ENCODE measurements at regions of chr5 and their contacts with region 1.

Region 1: DNA sequence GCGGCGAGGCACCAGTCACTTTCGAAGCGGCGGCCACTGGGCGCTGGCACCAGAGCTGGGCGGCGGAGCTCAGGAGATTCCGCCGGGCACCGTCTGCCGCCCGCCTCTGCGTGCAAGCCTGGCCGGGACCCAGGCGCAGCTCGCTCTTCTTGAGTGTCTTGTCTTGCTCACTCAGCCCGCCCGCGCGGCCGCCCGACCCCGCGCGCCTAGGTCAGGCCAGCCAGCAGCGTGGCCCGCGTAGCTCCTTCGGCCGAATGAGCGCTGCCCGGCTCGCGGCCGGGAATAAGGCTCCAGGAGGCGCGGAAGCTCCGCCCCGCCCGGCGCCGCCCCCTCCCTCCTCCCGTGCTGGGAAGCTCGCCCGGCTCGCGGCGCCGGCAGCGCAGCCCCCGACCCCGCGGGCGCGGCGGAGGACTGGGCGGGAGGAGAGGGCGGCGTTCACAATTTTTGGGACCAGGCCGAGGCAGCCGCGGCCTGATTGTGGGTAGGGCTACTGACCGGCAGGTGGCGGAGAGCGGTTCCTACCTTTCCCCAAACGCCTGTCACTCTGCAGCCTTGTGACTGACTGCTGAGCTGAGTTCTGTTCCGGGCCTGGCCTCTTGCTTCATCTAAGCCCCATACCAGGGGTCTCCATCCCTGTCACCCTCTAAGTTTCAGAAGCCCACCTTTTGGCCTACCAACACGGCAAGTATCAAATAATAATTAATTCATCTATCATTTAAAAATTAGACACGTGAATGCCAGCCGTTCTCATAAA is at the start of gene HBEGF:
- DNase-seq: peak; percentile 94
- ATAC-seq: peak; percentile 89
- H3K4me3 ChIP-seq: peak within 1 kb of the TSS; percentile 90
- H3K27ac ChIP-seq: peak within 1 kb of the TSS; percentile 82
- H3K4me1 ChIP-seq: peaks cover 42% of the 10 kb centered on the region
- H3K27me3 ChIP-seq: no peaks in the 10 kb centered on the region
- CTCF ChIP-seq: peak; percentile 52
- total RNA-seq, gene HBEGF: 44.3 TPM

Region 2: DNA sequence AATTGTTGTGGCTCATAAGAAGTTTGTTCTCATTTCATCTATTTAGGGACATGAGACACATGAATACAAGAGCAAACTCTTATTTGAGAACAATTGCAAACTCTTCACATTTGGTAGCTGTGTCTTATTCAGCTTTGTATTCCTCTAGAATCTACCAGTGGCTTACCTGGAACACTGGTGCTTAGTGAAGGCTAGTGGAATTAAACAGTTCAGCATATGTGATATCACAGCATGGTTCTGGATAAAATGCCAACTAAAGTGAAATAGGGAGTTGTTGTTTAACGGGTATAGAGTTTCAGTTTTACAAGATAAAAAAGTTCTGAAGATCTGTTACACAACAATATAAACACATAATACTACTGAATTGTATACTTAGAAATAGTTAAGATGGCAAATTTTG is 352.3 kb before region 1 on chr5:
- intact Hi-C with region 1: no loop called
- DNase-seq: no peak
- ATAC-seq: no peak
- H3K4me3 ChIP-seq: no peak overlapping the region
- H3K27ac ChIP-seq: no peak overlapping the region
- H3K4me1 ChIP-seq: no peaks in the 10 kb centered on the region
- H3K27me3 ChIP-seq: peaks cover 21% of the 10 kb centered on the region
- CTCF ChIP-seq: no peak

Region 3: DNA sequence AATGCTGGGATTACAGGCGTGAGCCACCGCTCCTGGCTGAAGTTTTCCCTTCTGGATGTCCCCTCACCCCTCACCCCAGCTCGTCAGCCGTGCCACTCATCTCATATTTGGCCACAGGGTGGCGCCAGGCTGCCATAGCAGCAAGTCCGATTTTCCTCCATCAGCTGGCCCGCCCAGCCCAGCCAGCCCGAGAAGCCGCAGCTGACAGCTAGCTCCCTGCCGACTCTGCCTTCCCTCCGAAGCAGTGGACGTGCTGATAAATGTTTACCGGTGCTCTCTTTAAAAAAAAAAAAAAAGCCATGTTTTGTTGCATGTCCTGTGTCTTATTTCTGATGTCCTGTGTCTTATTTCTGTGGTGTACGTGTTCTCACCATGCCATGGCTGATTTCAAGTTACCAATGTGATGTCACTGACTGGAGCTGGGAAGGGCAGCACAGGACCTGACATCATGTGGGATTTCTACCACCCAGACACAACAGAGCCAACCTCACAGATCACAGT is 102.0 kb before region 1 on chr5:
- intact Hi-C with region 1: loop called (anchors 5 kb)
- DNase-seq: peak; percentile 94
- ATAC-seq: peak; percentile 85
- H3K4me3 ChIP-seq: no peak overlapping the region
- H3K27ac ChIP-seq: peak overlapping the region; percentile 1
- H3K4me1 ChIP-seq: peaks cover 53% of the 10 kb centered on the region
- H3K27me3 ChIP-seq: no peaks in the 10 kb centered on the region
- CTCF ChIP-seq: peak; percentile 86

Measured in upper lobe of right lung (tissue), 1 donor.